Dendritic cell treated with granulocyte-macrophage colony-stimulating factor and Interleukin-4, amounts not matched to agents 40 ng/mL and 50 ng/mL, for 4 days (primary cell): ENCODE measurements at regions of chr1 and their contacts with region 1.

Region 1: DNA sequence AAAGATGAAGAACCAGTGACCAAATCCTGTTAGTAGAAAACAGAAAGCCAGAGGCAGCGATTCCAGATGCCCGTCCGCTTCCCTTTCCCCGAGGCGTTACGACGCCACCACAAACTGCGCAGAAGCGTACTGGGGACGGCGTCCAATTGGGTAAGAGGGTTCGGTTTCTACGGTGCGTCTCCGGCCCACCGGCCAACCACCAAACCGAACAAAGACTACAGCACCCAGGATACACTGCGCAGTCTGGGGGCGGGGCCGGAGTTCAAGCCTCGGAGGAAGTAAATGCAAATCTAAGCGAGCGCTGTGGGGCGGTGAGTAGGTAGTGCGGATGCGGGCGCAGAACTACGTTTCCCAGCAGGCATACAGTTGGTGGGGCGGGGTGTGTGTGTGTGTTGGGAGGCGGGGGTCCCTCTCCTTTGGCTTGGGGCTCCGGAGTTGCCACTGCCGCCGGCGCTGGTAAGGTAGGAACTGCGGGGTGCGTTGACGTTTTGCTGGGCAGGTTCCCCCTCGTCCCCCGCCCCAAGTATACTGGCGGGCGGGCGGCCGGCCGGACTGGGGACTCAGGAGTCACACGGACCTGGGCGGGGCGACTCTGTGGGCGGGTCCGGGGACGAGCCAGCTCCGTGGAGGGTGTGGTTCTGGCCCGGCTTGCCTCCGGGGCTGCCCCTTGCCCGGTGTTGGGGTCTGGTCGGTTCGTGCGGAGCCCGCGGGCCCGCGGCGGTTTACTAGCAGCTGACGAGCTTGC is at the starts of genes SWT1 and TRMT1L:
- H3K4me3 Mint-ChIP-seq: peak within 1 kb of the TSS; percentile 89
- H3K27ac Mint-ChIP-seq: peak within 1 kb of the TSS; percentile 99
- H3K4me1 Mint-ChIP-seq: peaks cover 41% of the 10 kb centered on the region
- H3K27me3 Mint-ChIP-seq: no peaks in the 10 kb centered on the region

Region 2: DNA sequence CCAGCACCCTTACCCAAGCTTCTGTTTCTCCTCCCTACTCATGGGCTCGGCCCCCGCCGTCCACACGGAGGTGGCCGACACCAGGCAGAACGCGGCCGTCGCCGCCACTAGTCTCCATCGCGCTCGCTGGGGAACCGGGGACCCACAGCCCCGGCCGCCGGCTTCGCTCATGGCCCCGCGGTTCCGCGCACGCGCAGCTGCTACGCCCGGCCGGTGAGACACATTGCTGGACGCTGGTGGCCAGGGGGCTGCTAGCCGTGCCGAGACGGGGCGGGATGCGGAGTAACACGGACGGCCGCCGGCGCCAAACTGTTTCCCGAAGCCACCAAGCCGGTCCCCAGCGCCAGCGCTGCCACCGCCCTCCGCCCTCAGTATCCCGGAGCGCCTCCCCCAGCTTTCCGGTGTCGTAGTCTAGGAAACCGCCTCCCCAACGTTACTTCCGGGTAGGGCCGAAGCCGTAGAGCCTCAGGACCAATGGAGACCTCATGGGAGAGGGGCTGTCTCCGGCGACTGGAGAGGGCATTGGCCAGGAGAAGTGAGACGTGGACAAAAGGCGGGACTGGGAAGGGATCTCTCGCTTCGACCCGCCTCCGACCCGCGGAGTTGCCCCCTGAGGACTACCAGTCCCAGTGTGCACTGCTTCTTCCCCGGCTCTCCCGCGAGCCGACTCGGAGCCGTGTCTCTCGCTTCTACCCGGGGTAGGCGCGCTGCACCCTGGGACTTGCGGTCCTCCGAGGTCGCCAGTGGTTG is 402.4 kb before region 1 on chr1 and contains the start of gene EDEM3:
- intact Hi-C with region 1: loop called (anchors 2 kb)
- H3K4me3 Mint-ChIP-seq: peak within 1 kb of the TSS; percentile 96
- H3K27ac Mint-ChIP-seq: peak within 1 kb of the TSS; percentile 95
- H3K4me1 Mint-ChIP-seq: peaks cover 22% of the 10 kb centered on the region
- H3K27me3 Mint-ChIP-seq: peaks cover 2% of the 10 kb centered on the region

Region 3: GRCh38 chr1:185044981-185045813 is 111.8 kb before region 1 on chr1 and contains the start of gene RNF2:
- intact Hi-C with region 1: loop called (anchors 5 kb)
- H3K4me3 Mint-ChIP-seq: peak within 1 kb of the TSS; percentile 88
- H3K27ac Mint-ChIP-seq: peak within 1 kb of the TSS; percentile 89
- H3K4me1 Mint-ChIP-seq: peaks cover 31% of the 10 kb centered on the region
- H3K27me3 Mint-ChIP-seq: no peaks in the 10 kb centered on the region

Region 4: GRCh38 chr1:185193756-185194155 is 36.7 kb after region 1 on chr1:
- intact Hi-C with region 1: no loop called
- H3K4me3 Mint-ChIP-seq: no peak overlapping the region
- H3K27ac Mint-ChIP-seq: no peak overlapping the region
- H3K4me1 Mint-ChIP-seq: no peaks in the 10 kb centered on the region
- H3K27me3 Mint-ChIP-seq: no peaks in the 10 kb centered on the region